ENCODE measurements at regions of chr5 and their contacts with region 1.

Region 1: DNA sequence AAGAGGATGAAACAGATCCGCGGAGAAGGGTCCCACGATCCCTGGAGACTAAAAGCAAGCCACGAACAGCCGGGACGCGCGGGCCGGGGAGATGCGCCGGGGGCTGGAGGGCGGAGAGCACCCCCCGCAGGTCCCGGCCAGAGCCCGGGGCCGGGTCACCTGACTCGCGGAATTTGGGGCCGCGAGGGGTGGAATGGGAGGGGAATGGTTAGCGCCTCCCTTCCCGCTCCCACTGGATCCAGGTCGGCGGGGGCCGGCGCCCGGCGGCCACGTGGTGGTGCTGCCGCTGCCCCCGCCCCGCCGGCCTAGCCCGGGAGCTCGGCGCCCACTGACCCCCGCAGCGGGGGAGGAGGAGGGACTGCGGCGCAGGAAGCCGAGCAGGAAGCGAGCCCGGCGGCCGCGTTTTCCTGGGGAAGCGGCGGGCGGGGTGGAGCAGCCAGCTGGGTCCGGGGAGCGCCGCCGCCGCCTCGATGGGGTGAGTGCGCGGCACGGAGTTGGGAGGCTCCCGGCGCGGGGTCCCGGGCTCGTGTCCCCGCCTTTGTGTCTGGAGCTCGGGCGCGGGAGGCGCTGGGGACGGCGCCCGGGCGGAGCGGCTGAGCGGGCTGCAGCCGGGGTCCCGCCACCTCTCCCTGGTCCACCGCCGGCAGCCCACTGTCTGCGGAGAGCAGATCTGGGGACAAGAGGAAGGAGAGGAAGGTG is at the start of gene RAI14:
- DNase-seq: peak; percentile 79 to 85 (median 81)
- H3K4me3 ChIP-seq: peak within 1 kb of the TSS; percentile 2 to 97 (median 70)
- H3K27ac ChIP-seq: peak within 1 kb of the TSS; percentile 50 to 95 (median 81)
- H3K4me1 ChIP-seq: peaks cover 0 to 18% of the 10 kb centered on the region in 2 donors
- H3K27me3 ChIP-seq: no peaks in the 10 kb centered on the region
- CTCF ChIP-seq: no peak
- POLR2A ChIP-seq: peak; percentile 38 to 62
- total RNA-seq, gene RAI14: 12.5 to 158 (median 33.1) TPM

Region 2: DNA sequence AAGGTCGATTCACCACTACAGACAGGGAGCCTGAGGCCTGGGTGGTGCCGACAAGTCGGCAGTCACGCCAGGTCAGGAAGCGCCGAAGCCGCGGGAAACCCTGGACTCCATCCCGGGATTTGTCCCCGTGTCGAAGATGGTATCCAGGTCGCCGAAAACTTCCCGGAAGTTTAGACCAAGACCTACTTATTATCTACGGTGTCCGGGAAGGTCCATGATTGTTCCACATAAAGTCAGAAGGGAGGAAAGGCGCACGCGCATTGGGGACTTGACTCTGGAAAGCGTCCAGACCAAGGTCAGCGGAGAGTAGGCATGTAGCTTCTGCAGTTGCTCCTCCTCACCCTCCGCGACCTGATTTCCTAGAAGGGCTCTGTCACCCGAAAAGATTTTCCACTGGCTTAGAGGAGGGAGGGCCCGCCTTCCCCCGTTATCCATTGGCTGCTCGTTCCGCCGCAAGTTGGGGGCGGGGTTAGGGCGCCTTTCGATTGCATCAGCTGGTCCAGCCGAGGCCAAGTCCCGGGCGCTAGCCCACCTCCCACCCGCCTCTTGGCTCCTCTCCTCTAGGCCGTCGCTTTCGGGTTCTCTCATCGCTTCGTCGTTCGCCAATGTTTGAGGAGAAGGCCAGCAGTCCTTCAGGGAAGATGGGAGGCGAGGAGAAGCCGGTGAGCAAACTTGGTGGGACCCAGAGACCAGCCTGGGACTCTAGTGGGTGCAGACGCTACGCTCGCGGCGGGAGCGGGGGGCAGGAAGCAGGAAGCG is 1215.5 kb before region 1 on chr5 and contains the start of gene TARS1:
- intact Hi-C with region 1: no loop called
- DNase-seq: peak; percentile 99 to 100 (median 99)
- H3K4me3 ChIP-seq: peak within 1 kb of the TSS; percentile 47 to 99 (median 88)
- H3K27ac ChIP-seq: peak within 1 kb of the TSS; percentile 92 to 97 (median 95)
- H3K4me1 ChIP-seq: peaks cover 16 to 36% of the 10 kb centered on the region in 2 donors
- H3K27me3 ChIP-seq: no peaks in the 10 kb centered on the region
- CTCF ChIP-seq: no peak
- POLR2A ChIP-seq: peak; percentile 70 to 90
- total RNA-seq, gene TARS1: 45.3 to 296 (median 112) TPM

Region 3: GRCh38 chr5:34522599-34523386 is 133.4 kb before region 1 on chr5:
- intact Hi-C with region 1: loop called in 1 of 2 experiments (anchors 10 kb)
- DNase-seq: peak; percentile 73 to 90 (median 84)
- H3K4me3 ChIP-seq: no peak overlapping the region
- H3K27ac ChIP-seq: no peak overlapping the region
- H3K4me1 ChIP-seq: no peaks in the 10 kb centered on the region
- H3K27me3 ChIP-seq: no peaks in the 10 kb centered on the region
- CTCF ChIP-seq: peak; percentile 62 to 85 (median 80)
- POLR2A ChIP-seq: no peak

Measured in adrenal gland (tissue), 19 donors.